A673 (cell line): ENCODE measurements at regions of chr2 and their contacts with region 1.

Region 1: GRCh38 chr2:224778474-224778877 is 62.3 kb upstream of the CCDC195 start:
- DNase-seq: peak; percentile 69
- H3K4me3 ChIP-seq: no peak overlapping the region
- H3K27ac ChIP-seq: no peak overlapping the region
- H3K4me1 ChIP-seq: no peaks in the 10 kb centered on the region
- H3K27me3 ChIP-seq: no peaks in the 10 kb centered on the region
- CTCF ChIP-seq: peak; percentile 85

Region 2: DNA sequence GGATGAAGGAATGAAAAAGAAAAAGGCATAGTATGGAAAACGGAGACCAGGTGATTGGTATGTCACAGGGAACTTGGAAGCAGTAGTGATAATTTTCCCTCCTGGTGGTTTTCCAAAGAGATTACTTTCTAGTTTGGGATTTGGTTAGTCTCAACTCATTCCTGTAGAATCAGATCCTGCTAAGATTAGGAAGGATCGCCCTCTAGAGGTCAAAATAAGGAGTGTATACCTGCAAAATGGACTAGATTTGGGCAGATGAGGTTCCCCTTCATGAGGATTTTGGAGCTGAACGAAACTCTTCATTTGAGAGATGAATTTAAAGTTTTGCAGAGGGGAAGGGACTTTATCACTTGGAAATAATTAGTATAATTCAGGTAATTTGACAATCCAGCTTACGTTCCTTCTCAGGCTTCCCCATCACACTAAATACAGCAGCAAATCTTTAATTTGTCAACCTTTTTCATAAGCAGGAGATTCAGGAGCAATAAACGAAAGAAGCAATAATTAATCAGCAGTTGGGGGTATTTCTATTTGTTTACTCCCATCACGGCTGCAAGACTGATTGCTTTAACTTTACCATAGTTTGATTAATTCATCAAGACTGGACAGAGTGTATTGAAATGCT is 127.5 kb before region 1 on chr2:
- CTCF ChIA-PET with region 1: no interaction called
- POLR2A ChIA-PET with region 1: no interaction called
- intact Hi-C with region 1: loop called (anchors 5 kb)
- DNase-seq: peak; percentile 70
- H3K4me3 ChIP-seq: no peak overlapping the region
- H3K27ac ChIP-seq: no peak overlapping the region
- H3K4me1 ChIP-seq: peaks cover 4% of the 10 kb centered on the region
- H3K27me3 ChIP-seq: no peaks in the 10 kb centered on the region
- CTCF ChIP-seq: peak; percentile 83

Region 3: GRCh38 chr2:224734949-224735348 is 43.5 kb before region 1 on chr2:
- CTCF ChIA-PET with region 1: no interaction called
- POLR2A ChIA-PET with region 1: no interaction called
- intact Hi-C with region 1: no loop called
- DNase-seq: no peak
- H3K4me3 ChIP-seq: no peak overlapping the region
- H3K27ac ChIP-seq: no peak overlapping the region
- H3K4me1 ChIP-seq: no peaks in the 10 kb centered on the region
- H3K27me3 ChIP-seq: no peaks in the 10 kb centered on the region
- CTCF ChIP-seq: no peak

Region 4: GRCh38 chr2:225002039-225002655 is 223.7 kb after region 1 on chr2:
- CTCF ChIA-PET with region 1: interaction called, 4 read pairs
- POLR2A ChIA-PET with region 1: no interaction called
- intact Hi-C with region 1: loop called (anchors 10 kb)
- DNase-seq: peak; percentile 80
- H3K4me3 ChIP-seq: no peak overlapping the region
- H3K27ac ChIP-seq: no peak overlapping the region
- H3K4me1 ChIP-seq: no peaks in the 10 kb centered on the region
- H3K27me3 ChIP-seq: no peaks in the 10 kb centered on the region
- CTCF ChIP-seq: peak; percentile 84

Region 5: GRCh38 chr2:225650041-225650440 is 871.6 kb after region 1 on chr2:
- CTCF ChIA-PET with region 1: no interaction called
- POLR2A ChIA-PET with region 1: no interaction called
- intact Hi-C with region 1: loop called (anchors 10 kb)
- DNase-seq: no peak
- H3K4me3 ChIP-seq: no peak overlapping the region
- H3K27ac ChIP-seq: no peak overlapping the region
- H3K4me1 ChIP-seq: no peaks in the 10 kb centered on the region
- H3K27me3 ChIP-seq: no peaks in the 10 kb centered on the region
- CTCF ChIP-seq: no peak